Psoas muscle (tissue), 8 donors: ENCODE measurements at regions of chr10 and their contacts with region 1.

Region 1: DNA sequence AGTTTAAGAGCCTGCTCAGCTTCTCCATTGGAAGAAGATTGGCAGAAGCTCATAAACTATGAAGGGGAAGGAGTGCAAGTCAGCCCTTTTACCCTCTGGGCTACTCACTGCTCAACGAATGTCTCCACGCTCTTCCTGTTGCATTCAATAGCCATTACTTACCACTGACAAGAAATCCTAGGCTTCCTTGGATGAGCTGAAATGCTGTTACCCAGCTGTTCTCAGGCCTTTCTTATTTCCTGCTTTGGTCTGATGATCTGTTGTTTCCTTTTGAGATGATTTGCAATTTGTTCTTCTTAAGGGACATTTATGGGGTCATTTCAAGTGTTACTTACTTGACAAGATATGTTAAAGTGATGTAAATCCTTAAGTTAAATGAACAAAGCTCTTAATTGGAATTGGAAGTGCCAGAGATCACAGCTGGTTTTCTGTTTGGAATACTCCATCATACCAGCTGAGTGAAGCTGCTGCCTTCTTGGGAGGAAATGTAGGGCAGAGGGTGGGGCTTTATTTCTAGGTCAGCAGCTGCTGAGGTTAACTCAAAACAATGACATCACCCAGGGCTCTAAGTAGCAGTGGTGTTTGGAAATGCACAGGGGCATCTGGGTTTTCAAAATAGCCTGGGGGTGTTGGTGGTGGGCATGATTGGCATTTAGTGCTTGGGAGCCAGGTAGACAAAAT is 170.0 kb downstream of the PRKCQ start:
- DNase-seq: peak; percentile 26 to 64
- ATAC-seq: peak; percentile 97 to 99 (median 98)
- H3K4me3 ChIP-seq: peak overlapping the region; percentile 60
- H3K27ac ChIP-seq: peak overlapping the region; percentile 97
- H3K4me1 ChIP-seq: peaks cover 16% of the 10 kb centered on the region
- H3K27me3 ChIP-seq: no peaks in the 10 kb centered on the region
- CTCF ChIP-seq: no peak

Region 2: GRCh38 chr10:7146189-7146588 is 736.1 kb after region 1 on chr10:
- intact Hi-C with region 1: no loop called
- DNase-seq: no peak
- ATAC-seq: no peak
- H3K4me3 ChIP-seq: no peak overlapping the region
- H3K27ac ChIP-seq: no peak overlapping the region
- H3K4me1 ChIP-seq: no peaks in the 10 kb centered on the region
- H3K27me3 ChIP-seq: peaks cover 0 to 3% (median 0%) of the 10 kb centered on the region in 3 donors
- CTCF ChIP-seq: no peak

Region 3: GRCh38 chr10:7792541-7792940 is 1382.4 kb after region 1 on chr10:
- intact Hi-C with region 1: loop called in 1 of 2 experiments (anchors 5 kb)
- DNase-seq: no peak
- ATAC-seq: no peak
- H3K4me3 ChIP-seq: no peak overlapping the region
- H3K27ac ChIP-seq: peak overlapping the region; percentile 7
- H3K4me1 ChIP-seq: peaks cover 73% of the 10 kb centered on the region
- H3K27me3 ChIP-seq: no peaks in the 10 kb centered on the region
- CTCF ChIP-seq: no peak